Activated naive CD4-positive, alpha-beta T cell treated with anti-CD3 and anti-CD28 coated beads for 36 hours (primary cell): ENCODE measurements at regions of chr3 and their contacts with region 1.

Region 1: GRCh38 chr3:129052675-129053074 is 7.9 kb upstream of the GP9 start:
- DNase-seq: no peak
- H3K4me3 Mint-ChIP-seq: no peak overlapping the region
- H3K27ac Mint-ChIP-seq: no peak overlapping the region
- H3K4me1 Mint-ChIP-seq: peaks cover 10% of the 10 kb centered on the region
- H3K27me3 Mint-ChIP-seq: no peaks in the 10 kb centered on the region

Region 2: GRCh38 chr3:129016356-129016719 is 36.3 kb before region 1 on chr3:
- CTCF ChIA-PET with region 1: interaction called, 24 read pairs
- intact Hi-C with region 1: no loop called
- DNase-seq: peak; percentile 88
- H3K4me3 Mint-ChIP-seq: peak overlapping the region; percentile 73
- H3K27ac Mint-ChIP-seq: peak overlapping the region; percentile 95
- H3K4me1 Mint-ChIP-seq: peaks cover 38% of the 10 kb centered on the region
- H3K27me3 Mint-ChIP-seq: no peaks in the 10 kb centered on the region

Region 3: DNA sequence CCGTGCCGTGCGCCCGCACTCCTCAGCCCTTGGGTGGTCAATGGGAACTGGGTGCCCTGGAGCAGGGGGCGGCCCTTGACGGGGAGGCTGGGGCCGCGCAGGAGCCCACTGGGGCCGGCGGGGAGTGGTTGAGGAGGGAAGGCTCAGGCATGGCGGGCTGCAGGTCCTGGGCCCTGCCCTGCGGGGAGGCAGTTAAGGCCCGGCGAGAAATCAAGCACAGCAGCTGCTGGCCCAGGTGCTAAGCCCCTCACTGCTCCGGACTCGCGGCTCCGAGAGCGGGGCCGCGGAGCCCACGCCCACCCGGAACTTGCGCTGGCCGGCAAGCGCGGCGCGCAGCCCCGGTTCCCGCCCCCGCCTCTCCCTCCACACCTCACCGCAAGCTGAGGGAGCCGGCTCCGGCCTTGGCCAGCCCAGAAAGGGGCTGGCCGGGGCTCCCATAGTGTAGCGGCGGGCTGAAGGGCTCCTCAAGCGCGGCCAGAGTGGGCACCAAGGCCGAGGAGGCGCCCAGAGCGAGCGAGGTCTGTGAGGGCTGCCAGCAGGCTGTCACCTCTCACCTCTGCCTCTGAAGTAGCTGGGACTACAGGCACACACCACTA is 15.7 kb after region 1 on chr3:
- CTCF ChIA-PET with region 1: interaction called, 52 read pairs
- intact Hi-C with region 1: no loop called
- DNase-seq: no peak
- H3K4me3 Mint-ChIP-seq: peak overlapping the region; percentile 56
- H3K27ac Mint-ChIP-seq: no peak overlapping the region
- H3K4me1 Mint-ChIP-seq: peaks cover 8% of the 10 kb centered on the region
- H3K27me3 Mint-ChIP-seq: peaks cover 3% of the 10 kb centered on the region

Region 4: DNA sequence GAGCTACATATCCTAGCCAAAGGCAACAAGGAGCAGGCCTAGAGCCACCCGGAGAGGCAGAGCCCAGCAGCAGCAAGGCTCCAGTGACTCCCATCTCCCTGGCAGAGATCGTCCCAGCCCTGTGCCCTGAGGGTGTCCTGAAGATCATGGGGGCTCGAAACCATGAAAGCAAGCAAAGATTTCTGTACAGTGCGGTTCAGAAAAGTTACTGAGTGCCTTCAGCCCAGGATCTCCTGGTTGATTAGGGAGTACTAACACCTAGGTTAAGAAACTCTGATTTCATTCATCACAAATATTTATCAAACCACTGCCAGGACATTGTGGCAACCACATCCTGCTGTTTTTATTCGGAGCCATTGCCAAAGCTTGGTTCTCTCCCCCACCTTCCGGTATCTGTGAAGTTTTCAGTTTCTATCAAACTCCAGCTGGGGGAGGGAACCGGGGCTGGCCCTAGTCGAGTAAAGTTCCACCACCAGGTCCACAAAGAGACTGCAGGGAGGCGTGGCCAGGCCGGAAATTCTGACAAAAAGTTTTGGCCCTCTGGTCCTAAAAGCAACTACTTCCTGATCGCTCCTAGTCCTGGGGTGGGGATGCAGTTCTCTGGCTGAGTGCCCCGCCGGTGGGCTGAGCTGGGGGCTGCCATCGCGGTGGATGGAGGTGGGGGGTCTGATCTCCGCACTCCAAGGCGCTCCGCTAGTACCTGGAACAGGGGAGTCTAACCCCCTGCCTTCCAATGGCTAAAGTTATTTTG is 67.8 kb after region 1 on chr3:
- CTCF ChIA-PET with region 1: interaction called, 63 read pairs
- intact Hi-C with region 1: loop called (anchors 1 kb)
- DNase-seq: peak; percentile 98
- H3K4me3 Mint-ChIP-seq: peak overlapping the region; percentile 94
- H3K27ac Mint-ChIP-seq: peak overlapping the region; percentile 99
- H3K4me1 Mint-ChIP-seq: peaks cover 46% of the 10 kb centered on the region
- H3K27me3 Mint-ChIP-seq: no peaks in the 10 kb centered on the region

Region 5: GRCh38 chr3:129249276-129250065 is 196.8 kb after region 1 on chr3 and contains the start of gene COPG1:
- CTCF ChIA-PET with region 1: interaction called, 64 read pairs
- intact Hi-C with region 1: loop called (anchors 1 kb)
- DNase-seq: peak; percentile 86
- H3K4me3 Mint-ChIP-seq: peak within 1 kb of the TSS; percentile 95
- H3K27ac Mint-ChIP-seq: peak within 1 kb of the TSS; percentile 89
- H3K4me1 Mint-ChIP-seq: peaks cover 33% of the 10 kb centered on the region
- H3K27me3 Mint-ChIP-seq: no peaks in the 10 kb centered on the region
- total RNA-seq, gene COPG1: 125 to 128 TPM